ENCODE measurements at regions of chr17 and their contacts with region 1.

Region 1: GRCh38 chr17:75012346-75013091 is at the start of gene MRPL58:
- DNase-seq: peak; percentile 79
- H3K4me3 Mint-ChIP-seq: peak within 1 kb of the TSS; percentile 95
- H3K27ac Mint-ChIP-seq: peak within 1 kb of the TSS; percentile 86
- H3K4me1 Mint-ChIP-seq: peaks cover 22% of the 10 kb centered on the region
- H3K27me3 Mint-ChIP-seq: no peaks in the 10 kb centered on the region
- total RNA-seq, gene MRPL58: 65.4 and 68.1 TPM in 2 replicates

Region 2: DNA sequence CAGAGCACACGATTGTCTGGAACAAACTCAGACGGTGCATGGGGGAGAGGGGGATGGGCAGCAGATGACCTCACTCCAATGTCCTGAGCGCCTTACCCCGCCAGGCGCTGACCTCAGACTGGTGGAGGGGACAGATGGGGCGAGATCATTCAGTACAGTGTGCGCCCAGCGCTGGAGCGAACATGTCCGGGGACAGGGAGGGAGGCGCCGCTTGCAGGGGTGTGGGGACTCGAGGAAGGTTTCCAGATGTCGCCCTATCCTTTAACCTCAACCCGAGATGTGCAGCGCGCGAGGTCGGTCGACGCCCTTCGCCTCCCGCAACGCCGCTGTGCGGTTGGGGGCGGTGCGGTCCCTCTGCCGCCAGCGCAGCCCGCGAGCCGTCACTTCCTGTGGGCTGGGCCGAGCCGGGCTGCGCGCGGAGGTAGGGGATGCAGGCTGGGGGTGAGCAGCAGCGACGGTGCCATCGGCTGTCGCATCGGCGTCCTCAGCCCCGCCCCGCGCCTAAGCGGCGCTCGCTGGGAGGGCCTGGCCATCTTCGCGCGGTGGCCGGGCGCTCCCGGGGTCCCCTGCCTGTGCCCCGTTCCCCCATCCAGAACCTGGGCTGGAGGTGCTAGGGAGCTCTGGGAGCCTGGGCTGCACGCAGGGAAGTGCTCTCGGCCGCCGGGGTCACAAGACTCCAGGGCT is 30.4 kb before region 1 on chr17:
- intact Hi-C with region 1: loop called (anchors 2 kb)
- DNase-seq: peak; percentile 77
- H3K4me3 Mint-ChIP-seq: peak overlapping the region; percentile 76
- H3K27ac Mint-ChIP-seq: peak overlapping the region; percentile 29
- H3K4me1 Mint-ChIP-seq: peaks cover 17% of the 10 kb centered on the region
- H3K27me3 Mint-ChIP-seq: peaks cover 37% of the 10 kb centered on the region

Measured in activated T-helper 2 cell treated with anti-CD3 and anti-CD28 coated beads, Interferon-gamma antibody, Interleukin-2, Interleukin-4, amounts not matched to agents 10 μg/mL and 5 μg/mL and 100 μg/mL, durations not matched to agents 14 hours and 24 hours and 36 hours (primary cell).